Mucosa of descending colon (tissue), 3 donors: ENCODE measurements at regions of chr11 and their contacts with region 1.

Region 1: DNA sequence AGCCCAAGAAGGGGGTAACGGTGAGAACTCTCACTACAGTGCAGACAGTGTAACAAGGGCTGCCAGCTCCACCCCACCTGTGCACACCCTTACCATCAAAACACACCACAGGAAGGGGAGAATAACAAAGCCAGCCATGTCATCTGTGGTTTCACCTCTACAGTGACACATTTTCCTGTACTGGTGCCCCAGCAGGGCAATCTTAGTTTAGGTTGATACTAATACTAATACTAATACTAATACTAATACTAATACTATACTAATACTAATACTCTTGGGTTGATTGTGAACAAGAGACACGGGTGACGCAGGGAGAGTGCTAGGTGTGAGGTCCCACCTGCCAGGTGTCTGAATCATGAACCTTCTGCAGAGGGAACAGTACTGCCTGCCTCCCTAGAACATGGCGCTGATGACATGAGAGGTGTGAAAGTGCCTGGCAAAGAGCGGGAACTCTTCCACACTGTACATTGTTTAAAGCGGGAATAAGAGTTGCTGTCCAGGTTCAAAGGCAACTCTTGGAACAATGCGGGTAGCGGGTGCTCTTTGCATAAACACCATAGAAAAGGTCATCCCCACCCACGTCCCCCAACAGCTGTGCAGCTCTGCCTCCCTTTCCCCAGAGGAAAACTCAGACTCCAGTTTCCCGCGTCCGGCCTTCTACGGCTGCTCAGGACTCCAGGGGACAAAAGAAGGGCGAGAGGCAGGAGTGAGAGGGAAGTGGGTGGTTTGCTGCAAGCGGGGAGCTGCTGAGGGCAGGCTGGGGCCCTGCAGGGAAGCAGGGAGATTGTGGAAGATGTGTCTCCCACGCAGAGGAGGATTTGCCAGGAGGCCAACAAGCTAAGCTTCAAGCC is 25.0 kb upstream of the TMPRSS4 start:
- DNase-seq: peak in 1 of 3 donors; percentile 34
- ATAC-seq: peak; percentile 80
- H3K4me3 ChIP-seq: no peak overlapping the region
- H3K4me1 ChIP-seq: no peaks in the 10 kb centered on the region
- CTCF ChIP-seq: no peak

Region 2: DNA sequence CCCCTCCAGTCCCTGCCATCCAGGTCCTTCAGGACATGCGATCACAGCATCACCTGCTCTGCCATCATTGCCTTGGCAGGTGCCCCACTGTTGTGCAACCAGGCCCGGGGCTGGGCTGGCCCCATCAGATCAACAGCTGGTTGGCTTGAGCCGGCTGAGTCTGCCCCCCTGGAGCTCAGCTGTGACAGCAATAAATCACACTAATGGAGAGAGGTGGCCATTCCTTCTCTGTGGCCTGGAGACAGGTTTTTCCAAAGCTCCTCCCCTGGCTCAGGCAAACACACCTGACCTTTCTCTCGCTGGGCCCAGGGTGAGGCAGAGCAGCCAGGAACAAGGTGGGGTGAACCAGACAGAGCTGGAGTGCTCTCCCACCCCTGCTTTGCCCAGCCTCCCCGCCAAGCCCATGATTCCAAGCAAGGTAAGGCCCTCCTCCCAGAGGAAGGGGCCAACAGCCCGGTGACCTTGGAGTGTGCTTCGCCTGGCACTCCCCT is 218.4 kb before region 1 on chr11:
- intact Hi-C with region 1: loop called in 1 of 2 experiments (anchors 10 kb)
- DNase-seq: peak; percentile 87 to 91 (median 88)
- ATAC-seq: peak; percentile 90
- H3K4me3 ChIP-seq: no peak overlapping the region
- H3K4me1 ChIP-seq: peaks cover 9% of the 10 kb centered on the region
- CTCF ChIP-seq: no peak

Region 3: GRCh38 chr11:117946842-117947526 is 104.9 kb before region 1 on chr11:
- intact Hi-C with region 1: loop called in 1 of 2 experiments (anchors 10 kb)
- DNase-seq: peak; percentile 85 to 92 (median 90)
- ATAC-seq: peak; percentile 94
- H3K4me3 ChIP-seq: no peak overlapping the region
- H3K4me1 ChIP-seq: no peaks in the 10 kb centered on the region
- CTCF ChIP-seq: peak; percentile 80

Region 4: GRCh38 chr11:118000850-118001228 is 51.0 kb before region 1 on chr11:
- intact Hi-C with region 1: no loop called
- DNase-seq: no peak
- ATAC-seq: no peak
- H3K4me3 ChIP-seq: no peak overlapping the region
- H3K4me1 ChIP-seq: peaks cover 12% of the 10 kb centered on the region
- CTCF ChIP-seq: no peak

Region 5: DNA sequence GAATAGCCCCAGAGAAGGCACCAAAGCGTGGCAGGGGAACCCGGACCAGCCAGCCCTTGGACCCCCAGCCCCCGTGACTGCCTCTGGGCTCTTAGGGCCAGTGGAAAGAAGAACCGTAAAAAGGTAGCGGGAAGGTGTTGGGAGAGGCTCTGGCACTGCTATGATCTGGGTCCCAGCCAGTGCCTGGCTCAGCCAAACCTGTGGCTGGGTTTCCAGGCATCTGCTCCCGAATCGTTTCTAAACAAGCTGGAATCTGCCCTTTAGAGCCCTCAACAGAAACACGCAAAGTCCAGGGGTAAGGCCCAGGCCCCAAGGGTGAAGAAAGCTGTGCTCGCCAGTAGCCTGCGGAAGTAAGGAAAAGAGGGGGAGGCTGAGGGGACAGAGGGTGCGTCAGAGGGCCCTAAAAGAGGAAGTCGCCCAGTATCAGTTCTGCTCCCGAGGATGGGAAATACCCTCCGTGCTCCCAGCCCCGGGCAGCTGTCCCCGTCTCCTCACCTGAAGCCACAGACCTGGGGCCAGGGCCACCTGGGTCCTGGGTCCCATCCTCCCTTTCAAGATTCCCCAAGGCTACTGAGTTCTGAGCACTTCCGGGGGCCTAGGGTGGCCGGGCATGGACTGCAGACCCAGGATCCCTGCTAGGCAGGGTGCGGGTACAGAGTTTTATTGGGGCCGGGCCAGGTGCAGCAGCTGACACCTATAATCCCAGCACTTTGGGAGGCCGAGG is 40.9 kb before region 1 on chr11:
- intact Hi-C with region 1: no loop called
- DNase-seq: peak; percentile 57 to 86 (median 65)
- ATAC-seq: peak; percentile 70
- H3K4me3 ChIP-seq: no peak overlapping the region
- H3K4me1 ChIP-seq: no peaks in the 10 kb centered on the region
- CTCF ChIP-seq: no peak